ENCODE measurements at regions of chr11 and their contacts with region 1.

Region 1: DNA sequence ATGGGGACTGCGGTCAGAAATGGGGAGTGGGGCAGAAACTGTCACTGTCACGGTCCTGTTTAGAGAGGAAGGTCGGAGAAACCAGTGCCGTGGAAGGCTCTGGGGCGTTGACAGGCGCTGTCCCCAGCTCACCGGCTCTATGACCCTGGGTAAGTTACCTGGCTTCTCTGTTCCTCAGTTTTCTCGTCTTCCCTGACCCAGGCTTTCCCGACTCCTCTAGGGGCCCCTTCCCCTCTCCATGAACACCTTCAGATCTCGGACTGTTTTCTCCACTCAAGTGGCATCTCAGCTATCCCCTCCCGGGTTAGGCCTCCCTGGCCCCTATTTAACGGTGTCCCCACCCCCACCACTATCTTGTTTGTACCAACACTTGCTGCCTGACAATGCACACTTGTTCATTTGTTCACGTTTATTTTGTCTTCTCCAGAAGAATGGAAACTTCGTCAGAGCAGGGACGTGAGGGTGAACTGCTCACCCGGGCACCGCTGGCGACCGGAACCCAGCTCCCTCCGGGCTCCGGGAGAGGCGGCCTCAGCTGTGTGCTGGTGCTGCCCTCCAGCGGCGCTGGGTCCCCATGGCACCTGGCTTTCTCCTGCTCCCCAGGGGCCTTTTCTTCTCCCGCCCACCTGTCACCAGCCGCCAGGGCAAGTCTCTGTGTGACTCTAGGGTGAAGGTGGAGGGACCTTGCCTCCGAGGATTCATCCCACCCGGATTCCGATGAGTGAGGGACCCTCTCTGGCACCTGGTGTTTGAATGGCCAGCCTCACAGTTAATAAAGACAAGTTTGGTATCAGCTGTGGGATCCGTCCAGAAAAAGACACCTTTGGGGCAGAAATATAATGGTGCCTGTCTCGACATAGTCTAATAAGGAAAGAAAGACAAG is 33.1 kb upstream of the SLC35C1 start:
- DNase-seq: peak; percentile 95
- H3K4me3 ChIP-seq: peak overlapping the region; percentile 45 to 69
- H3K27ac ChIP-seq: no peak overlapping the region
- H3K4me1 ChIP-seq: peaks cover 0 to 7% of the 10 kb centered on the region in 2 experiments; a peak in 2 of 4 replicates
- H3K27me3 ChIP-seq: peaks cover 17% of the 10 kb centered on the region; the same call in 1 of the 2 replicates
- CTCF ChIP-seq: peak; percentile 91
- EP300 ChIP-seq: no peak
- RAD21 ChIP-seq: peak; percentile 95

Region 2: DNA sequence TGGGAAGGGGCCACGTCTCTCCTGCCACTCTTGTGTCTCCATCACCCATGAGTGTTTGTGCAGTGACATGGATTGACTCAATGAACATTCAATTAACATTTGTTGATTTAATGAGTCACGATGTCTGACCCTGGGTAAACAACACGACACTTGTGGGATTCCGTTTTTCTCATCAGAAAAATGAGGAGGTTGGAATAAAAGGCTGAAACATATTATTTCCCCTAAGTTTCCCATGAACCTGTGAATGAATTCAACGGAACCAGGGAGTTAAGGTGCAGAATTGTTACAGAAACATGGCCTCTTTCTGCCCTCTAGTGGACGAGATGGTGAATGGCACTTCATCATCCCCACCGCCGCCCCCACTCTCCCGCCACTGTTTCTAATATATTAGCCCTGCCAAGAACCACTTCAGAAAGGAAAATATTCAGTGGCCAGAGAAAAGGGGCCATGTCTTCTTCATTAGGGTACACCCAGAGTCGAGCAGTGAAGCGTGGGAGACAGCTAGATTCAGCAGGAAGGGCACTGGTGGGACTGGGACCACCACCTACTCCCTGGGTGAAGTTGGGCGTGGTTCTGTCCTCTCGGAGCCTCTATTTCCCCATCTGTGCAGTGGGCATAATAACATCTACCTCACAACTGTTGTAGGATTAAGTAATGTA is 439.4 kb before region 1 on chr11:
- CTCF ChIA-PET with region 1: interaction called, 104 read pairs
- POLR2A ChIA-PET with region 1: no interaction called
- DNase-seq: peak; percentile 81
- H3K4me3 ChIP-seq: no peak overlapping the region
- H3K27ac ChIP-seq: no peak overlapping the region
- H3K4me1 ChIP-seq: peaks cover 4 to 13% of the 10 kb centered on the region in 2 experiments; a peak in 2 of 4 replicates
- H3K27me3 ChIP-seq: no peaks in the 10 kb centered on the region; the same call in none of the 2 replicates
- CTCF ChIP-seq: peak; percentile 68
- EP300 ChIP-seq: no peak
- RAD21 ChIP-seq: peak; percentile 77

Region 3: GRCh38 chr11:45371251-45372115 is 400.3 kb before region 1 on chr11:
- CTCF ChIA-PET with region 1: interaction called, 252 read pairs
- POLR2A ChIA-PET with region 1: interaction called, 7 read pairs
- DNase-seq: peak; percentile 84
- H3K4me3 ChIP-seq: no peak overlapping the region; a peak in 1 of 4 replicates
- H3K27ac ChIP-seq: no peak overlapping the region
- H3K4me1 ChIP-seq: peaks cover 0 to 3% of the 10 kb centered on the region in 2 experiments; a peak in 2 of 4 replicates
- H3K27me3 ChIP-seq: peaks cover 25% of the 10 kb centered on the region; the same call in 1 of the 2 replicates
- CTCF ChIP-seq: peak; percentile 96
- EP300 ChIP-seq: no peak
- RAD21 ChIP-seq: peak; percentile 97

Region 4: DNA sequence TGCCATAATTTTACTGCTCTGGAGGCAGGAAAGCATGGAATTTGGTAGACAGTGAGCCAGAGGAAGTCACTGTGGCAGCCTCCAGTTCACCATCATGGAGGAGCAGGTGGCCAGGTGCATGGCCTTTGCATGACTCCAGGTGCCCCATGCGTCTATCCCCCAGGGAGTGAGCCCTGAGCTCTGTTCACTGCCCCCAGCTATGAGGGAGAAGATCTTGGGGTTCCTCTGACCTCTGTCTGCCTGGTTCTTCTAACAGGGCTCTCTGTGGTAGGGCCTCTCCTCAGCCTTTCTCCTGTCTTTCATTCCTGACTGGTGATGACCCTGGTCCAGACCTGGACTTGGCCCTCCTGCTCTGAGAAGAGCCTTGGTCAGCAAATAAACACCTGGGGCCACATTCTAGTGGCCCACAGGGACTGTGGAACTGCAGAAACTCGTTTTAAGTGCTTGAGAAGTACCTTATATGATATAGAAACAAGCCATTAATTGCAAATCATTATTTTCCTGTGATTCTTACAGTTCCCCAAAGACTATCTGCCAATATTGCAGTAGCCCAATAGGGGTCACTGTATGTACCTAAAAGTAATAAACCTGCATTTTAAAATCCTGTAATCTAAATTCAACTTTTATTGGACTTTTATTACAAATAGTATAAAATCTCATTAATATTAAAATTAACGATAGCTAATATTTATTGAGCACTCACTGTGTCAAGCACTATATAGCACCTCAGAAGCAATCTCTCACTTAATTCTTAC is 365.7 kb before region 1 on chr11:
- CTCF ChIA-PET with region 1: interaction called, 22 read pairs
- POLR2A ChIA-PET with region 1: no interaction called
- DNase-seq: no peak
- H3K4me3 ChIP-seq: no peak overlapping the region
- H3K27ac ChIP-seq: no peak overlapping the region
- H3K4me1 ChIP-seq: peaks cover 11 to 14% of the 10 kb centered on the region in 2 experiments; a peak in 3 of 4 replicates
- H3K27me3 ChIP-seq: no peaks in the 10 kb centered on the region
- CTCF ChIP-seq: peak; percentile 73
- EP300 ChIP-seq: no peak
- RAD21 ChIP-seq: peak; percentile 68

Region 5: DNA sequence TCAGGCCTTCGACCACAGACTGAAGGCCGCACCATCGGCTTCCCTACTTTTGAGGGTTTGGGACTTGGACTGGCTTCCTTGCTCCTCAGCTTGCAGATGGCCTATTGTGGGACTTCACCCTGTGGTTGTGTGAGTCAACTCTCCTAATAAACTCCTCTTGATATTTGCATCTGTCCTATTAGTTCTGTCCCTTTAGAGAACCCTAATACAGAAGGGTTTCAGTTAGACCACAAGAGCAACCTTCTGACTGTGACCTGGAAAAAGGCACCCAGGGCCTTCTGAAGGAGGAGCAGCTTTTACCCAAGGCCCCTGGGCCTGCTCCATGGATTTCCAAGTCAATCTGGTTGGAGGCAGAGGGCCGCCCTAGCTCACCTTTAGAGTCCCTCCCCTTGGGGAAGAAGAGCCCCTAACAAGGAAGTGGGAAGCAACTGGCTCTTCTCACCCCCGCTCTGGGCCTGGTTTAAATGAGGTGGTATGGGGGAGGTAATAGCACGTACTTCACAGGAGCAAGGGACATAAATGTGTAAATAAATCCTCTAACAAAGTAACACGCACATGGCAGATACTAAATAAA is 95.2 kb before region 1 on chr11:
- CTCF ChIA-PET with region 1: interaction called, 10 read pairs
- POLR2A ChIA-PET with region 1: no interaction called
- DNase-seq: no peak
- H3K4me3 ChIP-seq: no peak overlapping the region
- H3K27ac ChIP-seq: no peak overlapping the region
- H3K4me1 ChIP-seq: peaks cover 0 to 2% of the 10 kb centered on the region in 2 experiments; a peak in 1 of 4 replicates
- H3K27me3 ChIP-seq: peaks cover 6% of the 10 kb centered on the region; the same call in 1 of the 2 replicates
- CTCF ChIP-seq: no peak
- EP300 ChIP-seq: no peak
- RAD21 ChIP-seq: no peak

Region 6: DNA sequence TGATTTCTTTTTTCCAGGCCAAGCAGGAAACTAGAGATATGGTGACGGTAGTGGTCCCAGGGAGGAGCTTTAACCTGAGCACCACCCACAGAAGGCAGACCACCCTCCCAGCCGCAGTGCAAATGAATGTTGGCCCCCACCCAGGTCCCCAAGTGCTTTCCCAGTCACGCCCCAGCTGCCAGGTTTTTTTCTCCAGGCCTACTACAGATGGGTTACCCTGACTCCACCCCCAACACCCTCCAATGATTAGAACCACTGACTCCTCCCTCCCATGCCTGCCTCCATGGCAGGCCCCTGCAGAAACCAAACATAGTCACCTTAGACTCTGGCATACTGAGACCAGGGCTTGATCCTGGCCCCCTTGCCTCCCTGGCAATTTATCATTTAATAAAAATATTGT is 47.7 kb before region 1 on chr11:
- CTCF ChIA-PET with region 1: interaction called, 14 read pairs
- POLR2A ChIA-PET with region 1: no interaction called
- DNase-seq: no peak
- H3K4me3 ChIP-seq: no peak overlapping the region
- H3K27ac ChIP-seq: no peak overlapping the region
- H3K4me1 ChIP-seq: no peaks in the 10 kb centered on the region
- H3K27me3 ChIP-seq: no peaks in the 10 kb centered on the region; the same call in 1 of the 2 replicates
- CTCF ChIP-seq: no peak
- EP300 ChIP-seq: no peak
- RAD21 ChIP-seq: no peak

Region 7: DNA sequence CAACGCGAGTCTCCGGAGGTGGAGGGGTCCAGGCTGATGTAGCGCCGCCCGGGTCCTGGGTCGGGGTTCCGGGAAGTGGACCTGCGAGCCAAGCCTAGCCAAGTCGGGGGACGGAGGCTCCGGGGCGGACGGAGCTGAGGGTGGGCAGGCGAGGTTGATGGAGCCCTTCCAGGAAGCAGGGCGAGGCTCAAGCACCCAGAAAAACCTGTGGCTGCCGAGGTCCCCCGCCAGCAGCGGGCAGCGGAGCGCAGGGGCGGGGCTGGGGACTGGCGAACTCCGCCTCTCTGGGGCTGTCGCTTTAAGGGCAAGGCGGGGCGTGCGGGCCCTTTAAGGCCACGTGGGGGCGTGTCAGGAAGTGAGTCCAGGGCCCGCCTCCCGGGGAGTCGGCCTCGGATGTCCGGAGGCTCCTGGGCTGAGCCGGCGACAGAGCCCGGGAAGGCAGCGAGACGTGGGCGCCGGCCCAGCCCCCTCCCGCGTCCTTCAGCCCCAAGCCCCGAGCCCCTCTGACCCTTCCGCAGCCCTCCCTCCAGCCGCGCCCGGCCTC is 33.0 kb after region 1 on chr11 and contains the start of gene SLC35C1:
- CTCF ChIA-PET with region 1: interaction called, 18 read pairs
- POLR2A ChIA-PET with region 1: no interaction called
- DNase-seq: peak; percentile 98
- H3K4me3 ChIP-seq: peak within 1 kb of the TSS; percentile 66 to 95
- H3K27ac ChIP-seq: peak within 1 kb of the TSS; percentile 78 to 85
- H3K4me1 ChIP-seq: peaks cover 9 to 25% of the 10 kb centered on the region in 2 experiments; a peak in 2 of 4 replicates
- H3K27me3 ChIP-seq: no peaks in the 10 kb centered on the region
- CTCF ChIP-seq: peak; percentile 17; the same call in 1 of the 2 replicates
- EP300 ChIP-seq: no peak
- RAD21 ChIP-seq: no peak
- polyA plus RNA-seq, gene SLC35C1: 6.2 and 6.5 TPM in 2 replicates